Uterus (tissue), 4 donors: ENCODE measurements at regions of chr11 and their contacts with region 1.

Region 1: DNA sequence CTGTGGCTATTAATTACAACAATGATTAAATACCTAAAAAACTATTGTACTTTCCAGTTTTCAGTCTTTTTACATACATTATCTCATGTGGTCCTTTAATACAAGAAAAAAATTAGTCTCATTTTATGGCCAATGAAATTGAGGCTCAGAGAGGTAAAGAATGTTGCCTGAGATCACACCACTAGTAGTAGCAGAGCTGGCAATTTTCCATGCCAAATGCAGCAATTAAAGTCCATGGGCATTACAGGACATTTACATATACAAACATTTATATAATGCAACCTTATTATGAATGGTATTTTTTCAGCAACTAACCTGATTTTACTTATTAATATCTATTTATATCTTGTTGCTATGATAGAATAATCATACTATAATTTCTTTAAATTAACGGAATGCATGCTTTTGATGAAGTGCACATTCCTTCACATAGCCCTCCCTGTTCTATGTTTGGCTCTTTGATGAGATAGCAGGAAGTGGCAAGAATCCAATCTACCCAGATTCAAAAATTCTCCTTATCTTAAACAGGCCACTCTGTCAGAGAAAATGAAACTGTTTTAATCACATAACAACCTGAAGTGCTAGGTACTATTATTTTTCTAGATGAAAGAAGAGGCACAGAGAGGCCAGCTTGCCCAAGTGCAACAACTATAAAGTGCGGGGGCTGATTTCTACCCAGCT is 120.9 kb upstream of the LDLRAD3 start:
- DNase-seq: no peak
- H3K4me3 ChIP-seq: no peak overlapping the region
- H3K27ac ChIP-seq: no peak overlapping the region
- H3K4me1 ChIP-seq: peaks cover 0 to 4% of the 10 kb centered on the region in 2 donors
- H3K27me3 ChIP-seq: no peaks in the 10 kb centered on the region
- CTCF ChIP-seq: no peak
- POLR2A ChIP-seq: no peak

Region 2: DNA sequence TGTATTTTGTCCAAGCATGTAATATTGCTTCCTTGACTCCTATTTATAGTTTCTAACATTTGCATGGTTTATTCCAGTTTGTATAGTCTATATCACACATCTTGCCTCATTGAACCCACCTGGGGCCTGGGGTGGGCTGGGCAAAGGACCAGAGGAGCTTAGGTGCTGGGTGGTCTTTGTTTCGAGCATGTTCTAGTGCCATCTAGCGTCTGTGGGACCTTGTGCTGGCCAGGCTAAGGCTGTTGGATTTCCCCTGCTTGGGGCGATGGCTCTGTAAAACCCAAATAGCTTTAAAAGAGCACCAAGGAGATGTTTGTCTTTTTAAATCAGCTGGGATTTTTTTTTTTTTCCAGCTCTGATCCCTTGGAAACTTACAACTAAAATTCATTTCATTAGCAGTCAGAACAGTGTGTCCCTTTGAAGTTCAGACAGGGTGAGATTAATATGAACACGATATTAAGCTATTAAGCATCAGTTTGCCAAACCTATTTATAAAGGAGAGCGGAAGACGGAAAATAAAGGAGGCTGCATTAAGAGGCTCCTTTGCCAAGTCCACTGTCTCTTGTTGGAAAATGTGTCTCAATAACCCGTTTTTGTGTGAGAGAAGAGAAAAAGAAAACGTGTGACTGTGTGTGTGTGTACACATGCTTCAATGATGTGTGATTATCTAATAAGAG is 308.9 kb after region 1 on chr11:
- intact Hi-C with region 1: loop called (anchors 5 kb)
- DNase-seq: peak; percentile 63 to 68
- H3K4me3 ChIP-seq: no peak overlapping the region
- H3K27ac ChIP-seq: peak overlapping the region; percentile 8 to 11
- H3K4me1 ChIP-seq: no peaks in the 10 kb centered on the region
- H3K27me3 ChIP-seq: no peaks in the 10 kb centered on the region
- CTCF ChIP-seq: peak; percentile 66 to 78 (median 74)
- POLR2A ChIP-seq: no peak

Region 3: GRCh38 chr11:36264011-36264972 is 441.3 kb after region 1 on chr11:
- intact Hi-C with region 1: loop called (anchors 5 kb)
- DNase-seq: no peak
- H3K4me3 ChIP-seq: no peak overlapping the region
- H3K27ac ChIP-seq: no peak overlapping the region
- H3K4me1 ChIP-seq: no peaks in the 10 kb centered on the region
- H3K27me3 ChIP-seq: no peaks in the 10 kb centered on the region
- CTCF ChIP-seq: no peak
- POLR2A ChIP-seq: no peak